Lower lobe of right lung (tissue), 2 donors: ENCODE measurements at regions of chr3 and their contacts with region 1.

Region 1: GRCh38 chr3:197256836-197257444 is 41.5 kb downstream of the DLG1 start:
- DNase-seq: no peak
- ATAC-seq: no peak
- H3K4me3 ChIP-seq: no peak overlapping the region
- H3K27ac ChIP-seq: no peak overlapping the region
- H3K4me1 ChIP-seq: peaks cover 10% of the 10 kb centered on the region
- H3K27me3 ChIP-seq: no peaks in the 10 kb centered on the region
- CTCF ChIP-seq: peak; percentile 68

Region 2: GRCh38 chr3:197137751-197138150 is 119.2 kb before region 1 on chr3:
- intact Hi-C with region 1: no loop called
- DNase-seq: peak; percentile 69
- ATAC-seq: no peak
- H3K4me3 ChIP-seq: no peak overlapping the region
- H3K27ac ChIP-seq: no peak overlapping the region
- H3K4me1 ChIP-seq: no peaks in the 10 kb centered on the region
- H3K27me3 ChIP-seq: no peaks in the 10 kb centered on the region
- CTCF ChIP-seq: no peak

Region 3: GRCh38 chr3:197501879-197502620 is 245.1 kb after region 1 on chr3:
- intact Hi-C with region 1: loop called (anchors 10 kb)
- DNase-seq: peak; percentile 77
- ATAC-seq: peak; percentile 89 to 91
- H3K4me3 ChIP-seq: no peak overlapping the region
- H3K27ac ChIP-seq: no peak overlapping the region
- H3K4me1 ChIP-seq: peaks cover 7% of the 10 kb centered on the region
- H3K27me3 ChIP-seq: no peaks in the 10 kb centered on the region
- CTCF ChIP-seq: peak; percentile 61